Panc1 (cell line): ENCODE measurements at regions of chr10 and their contacts with region 1.

Region 1: GRCh38 chr10:68348265-68348741 is 15.6 kb upstream of the PBLD start:
- DNase-seq: peak; percentile 58
- ATAC-seq: peak; percentile 70
- H3K4me3 ChIP-seq: no peak overlapping the region
- H3K27ac ChIP-seq: no peak overlapping the region
- H3K4me1 ChIP-seq: no peaks in the 10 kb centered on the region; the same call in 1 of the 2 replicates
- H3K27me3 ChIP-seq: no peaks in the 10 kb centered on the region
- CTCF ChIP-seq: peak; percentile 95

Region 2: DNA sequence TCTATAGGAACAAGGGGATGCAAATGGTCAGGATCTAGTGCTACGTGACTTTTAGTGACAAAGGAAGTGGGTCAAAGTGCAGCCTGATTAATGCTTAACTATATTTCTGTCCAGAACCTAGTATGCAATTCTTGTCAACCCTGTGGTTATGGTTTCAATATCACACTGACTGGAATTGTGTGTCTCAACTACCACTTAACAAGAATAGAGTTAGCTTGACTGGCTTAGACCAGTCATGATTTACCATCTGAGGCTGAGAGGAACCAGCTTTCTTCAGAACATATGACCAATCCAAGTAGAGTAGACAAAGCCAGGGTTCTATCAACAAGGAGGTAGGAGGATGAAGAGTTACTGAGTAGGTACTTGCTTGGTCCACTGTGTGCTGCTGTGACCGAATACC is 184.6 kb before region 1 on chr10:
- CTCF ChIA-PET with region 1: no interaction called
- POLR2A ChIA-PET with region 1: no interaction called
- in situ Hi-C with region 1: no loop called
- intact Hi-C with region 1: no loop called
- DNase-seq: no peak
- ATAC-seq: no peak
- H3K4me3 ChIP-seq: no peak overlapping the region
- H3K27ac ChIP-seq: no peak overlapping the region
- H3K4me1 ChIP-seq: no peaks in the 10 kb centered on the region
- H3K27me3 ChIP-seq: no peaks in the 10 kb centered on the region
- CTCF ChIP-seq: no peak

Region 3: GRCh38 chr10:68251625-68252495 is 96.4 kb before region 1 on chr10:
- CTCF ChIA-PET with region 1: no interaction called
- POLR2A ChIA-PET with region 1: no interaction called
- in situ Hi-C with region 1: no loop called
- intact Hi-C with region 1: no loop called
- DNase-seq: no peak
- ATAC-seq: no peak
- H3K4me3 ChIP-seq: no peak overlapping the region
- H3K27ac ChIP-seq: no peak overlapping the region
- H3K4me1 ChIP-seq: no peaks in the 10 kb centered on the region
- H3K27me3 ChIP-seq: no peaks in the 10 kb centered on the region; the same call in 1 of the 2 replicates
- CTCF ChIP-seq: no peak

Region 4: GRCh38 chr10:68288717-68289116 is 59.6 kb before region 1 on chr10:
- CTCF ChIA-PET with region 1: interaction called, 11 read pairs
- POLR2A ChIA-PET with region 1: interaction called, 7 read pairs
- in situ Hi-C with region 1: no loop called
- intact Hi-C with region 1: no loop called
- DNase-seq: no peak
- ATAC-seq: no peak
- H3K4me3 ChIP-seq: no peak overlapping the region
- H3K27ac ChIP-seq: no peak overlapping the region
- H3K4me1 ChIP-seq: no peaks in the 10 kb centered on the region
- H3K27me3 ChIP-seq: no peaks in the 10 kb centered on the region
- CTCF ChIP-seq: no peak

Region 5: GRCh38 chr10:68318331-68319059 is 29.8 kb before region 1 on chr10:
- CTCF ChIA-PET with region 1: no interaction called
- POLR2A ChIA-PET with region 1: interaction called, 11 read pairs
- in situ Hi-C with region 1: no loop called
- intact Hi-C with region 1: no loop called
- DNase-seq: no peak
- ATAC-seq: no peak
- H3K4me3 ChIP-seq: no peak overlapping the region
- H3K27ac ChIP-seq: peak overlapping the region; percentile 30; the same call in 1 of the 2 replicates
- H3K4me1 ChIP-seq: no peaks in the 10 kb centered on the region
- H3K27me3 ChIP-seq: no peaks in the 10 kb centered on the region
- CTCF ChIP-seq: no peak

Region 6: GRCh38 chr10:68331455-68332258 is 16.6 kb before region 1 on chr10 and contains the start of gene HNRNPH3:
- CTCF ChIA-PET with region 1: no interaction called
- POLR2A ChIA-PET with region 1: interaction called, 12 read pairs
- in situ Hi-C with region 1: no loop called
- intact Hi-C with region 1: no loop called
- DNase-seq: peak; percentile 89
- ATAC-seq: peak; percentile 85
- H3K4me3 ChIP-seq: peak within 1 kb of the TSS; percentile 65 to 90
- H3K27ac ChIP-seq: peak within 1 kb of the TSS; percentile 100
- H3K4me1 ChIP-seq: peaks cover 51% of the 10 kb centered on the region
- H3K27me3 ChIP-seq: no peaks in the 10 kb centered on the region
- CTCF ChIP-seq: no peak
- total RNA-seq, gene HNRNPH3: 143 TPM

Region 7: DNA sequence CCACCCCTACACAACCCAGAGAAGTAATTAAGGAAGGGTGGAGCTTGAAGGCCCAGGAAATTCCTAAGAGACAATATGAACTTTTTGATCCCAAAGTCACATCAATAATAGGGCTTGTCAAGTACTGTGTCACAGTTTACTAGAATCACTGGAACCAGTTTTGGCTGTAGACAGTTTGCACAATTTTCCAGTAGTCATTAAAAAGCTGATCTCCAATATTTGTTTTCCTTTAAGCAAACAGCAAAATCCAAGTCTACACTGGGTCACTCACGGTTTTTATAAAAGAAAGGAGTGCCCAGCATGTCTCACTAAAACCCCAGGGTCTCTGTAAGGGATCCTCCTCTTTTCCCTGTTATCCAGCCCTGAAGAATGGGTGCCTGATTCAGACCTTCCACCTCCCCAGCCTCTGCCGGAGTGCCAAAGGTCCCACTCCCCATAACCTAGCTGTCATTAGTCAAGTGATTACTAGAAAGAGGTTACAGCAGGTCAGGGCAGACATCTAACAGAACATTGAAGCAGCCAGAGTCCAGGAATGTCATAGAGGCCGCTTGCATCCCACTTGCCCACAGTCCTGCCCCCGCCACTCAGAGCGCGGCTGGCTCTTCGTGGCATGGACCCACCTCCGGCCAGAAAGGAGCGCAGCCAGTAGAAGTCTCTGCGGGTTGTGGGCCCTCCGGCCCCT is 178.5 kb after region 1 on chr10:
- CTCF ChIA-PET with region 1: no interaction called
- POLR2A ChIA-PET with region 1: no interaction called
- in situ Hi-C with region 1: no loop called
- intact Hi-C with region 1: no loop called
- DNase-seq: no peak
- ATAC-seq: peak; percentile 80
- H3K4me3 ChIP-seq: peak overlapping the region; percentile 91 to 96
- H3K27ac ChIP-seq: peak overlapping the region; percentile 89
- H3K4me1 ChIP-seq: no peaks in the 10 kb centered on the region
- H3K27me3 ChIP-seq: no peaks in the 10 kb centered on the region
- CTCF ChIP-seq: no peak

Region 8: DNA sequence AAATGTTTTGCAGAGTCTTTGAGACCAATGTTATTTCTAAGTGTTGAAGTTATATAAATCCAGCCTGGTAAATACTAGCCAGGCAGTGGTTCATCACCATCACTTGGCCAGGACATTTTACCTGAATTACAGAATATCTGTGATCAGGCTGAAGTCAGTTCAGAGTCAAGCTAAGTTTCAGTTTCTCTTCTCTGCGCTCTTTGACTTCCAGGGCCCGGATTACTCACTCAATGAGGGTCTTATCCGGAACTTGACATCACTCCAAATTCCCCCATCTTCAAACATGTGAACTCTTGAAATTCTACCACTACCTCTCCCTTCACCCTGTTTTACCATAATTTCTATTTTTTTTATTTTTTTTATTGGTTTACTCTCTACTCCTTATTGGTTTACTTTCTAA is 336.1 kb after region 1 on chr10:
- CTCF ChIA-PET with region 1: no interaction called
- POLR2A ChIA-PET with region 1: no interaction called
- in situ Hi-C with region 1: no loop called
- intact Hi-C with region 1: no loop called
- DNase-seq: no peak
- ATAC-seq: no peak
- H3K4me3 ChIP-seq: no peak overlapping the region
- H3K27ac ChIP-seq: no peak overlapping the region
- H3K4me1 ChIP-seq: no peaks in the 10 kb centered on the region
- H3K27me3 ChIP-seq: no peaks in the 10 kb centered on the region
- CTCF ChIP-seq: no peak